Activated T-helper 2 cell treated with anti-CD3 and anti-CD28 coated beads, Interferon-gamma antibody, Interleukin-2, Interleukin-4, amounts not matched to agents 10 μg/mL and 5 μg/mL and 100 μg/mL, durations not matched to agents 14 hours and 24 hours and 36 hours (primary cell): ENCODE measurements at regions of chr22 and their contacts with region 1.

Region 1: DNA sequence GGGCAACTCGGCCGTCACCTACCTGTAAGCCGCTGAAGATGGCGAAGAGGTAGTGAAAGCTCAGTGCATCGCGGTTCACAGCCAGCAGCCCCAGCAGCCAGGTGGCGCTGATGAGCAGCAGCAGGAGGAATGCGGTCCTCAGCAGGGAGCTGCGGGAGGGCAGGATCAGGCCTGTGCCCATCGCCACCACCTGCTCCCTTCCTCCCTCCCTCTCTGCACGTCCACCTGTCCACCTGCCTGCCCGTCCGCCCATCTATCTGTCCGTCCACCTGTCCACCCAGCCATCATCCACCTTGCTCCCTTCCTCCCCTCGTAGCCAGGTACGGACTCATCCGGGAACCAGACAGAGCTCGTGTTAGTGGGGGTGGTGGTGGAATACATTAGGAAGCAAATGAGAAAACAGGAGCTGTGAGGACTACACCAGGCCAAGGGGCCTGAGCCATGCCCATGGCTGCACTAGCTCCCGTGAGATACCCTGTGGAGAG is 32.2 kb downstream of the TRMU start:
- DNase-seq: peak; percentile 55
- H3K4me3 Mint-ChIP-seq: no peak overlapping the region
- H3K27ac Mint-ChIP-seq: no peak overlapping the region
- H3K4me1 Mint-ChIP-seq: no peaks in the 10 kb centered on the region
- H3K27me3 Mint-ChIP-seq: peaks cover under 1% of the 10 kb centered on the region

Region 2: GRCh38 chr22:46542011-46542985 is 174.5 kb after region 1 on chr22:
- intact Hi-C with region 1: loop called (anchors 1 kb)
- DNase-seq: peak; percentile 56
- H3K4me3 Mint-ChIP-seq: no peak overlapping the region
- H3K27ac Mint-ChIP-seq: no peak overlapping the region
- H3K4me1 Mint-ChIP-seq: peaks cover 6% of the 10 kb centered on the region
- H3K27me3 Mint-ChIP-seq: peaks cover 25% of the 10 kb centered on the region